Endothelial cell of umbilical vein (primary cell): ENCODE measurements at regions of chr9 and their contacts with region 1.

Region 1: GRCh38 chr9:87787735-87788134 is 61.8 kb downstream of the CTSL start:
- DNase-seq: no peak
- H3K4me3 ChIP-seq: no peak overlapping the region
- H3K27ac ChIP-seq: no peak overlapping the region
- H3K4me1 ChIP-seq: peaks cover under 1% of the 10 kb centered on the region
- H3K27me3 ChIP-seq: no peaks in the 10 kb centered on the region
- CTCF ChIP-seq: no peak
- POLR2A ChIP-seq: no peak

Region 2: DNA sequence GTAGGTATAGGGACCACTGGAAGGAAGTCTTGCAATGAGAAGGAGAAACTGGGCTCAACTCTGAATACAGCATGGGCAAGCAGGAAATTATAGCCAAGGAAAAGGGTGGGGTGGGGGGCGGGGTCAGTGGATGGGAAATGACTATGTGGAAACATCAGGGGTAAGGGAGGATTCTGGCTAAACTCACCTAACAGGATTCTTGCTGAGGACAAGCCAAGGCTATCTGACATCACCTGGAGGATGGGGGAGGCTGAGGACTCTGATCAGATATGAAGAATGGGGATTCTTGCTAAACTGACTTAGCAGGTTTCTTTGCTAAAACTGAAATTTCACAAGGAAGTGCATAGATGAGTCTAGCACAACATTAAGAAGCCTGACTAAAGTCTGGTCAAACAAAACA is 21.0 kb before region 1 on chr9:
- CTCF ChIA-PET with region 1: no interaction called
- POLR2A ChIA-PET with region 1: no interaction called
- dilution Hi-C with region 1: no loop called
- intact Hi-C with region 1: loop called (anchors 1 kb)
- DNase-seq: no peak
- H3K4me3 ChIP-seq: no peak overlapping the region
- H3K27ac ChIP-seq: no peak overlapping the region
- H3K4me1 ChIP-seq: no peaks in the 10 kb centered on the region
- H3K27me3 ChIP-seq: peaks cover 2 to 3% of the 10 kb centered on the region in 2 experiments
- CTCF ChIP-seq: no peak
- POLR2A ChIP-seq: no peak